Activated B cell treated with CpG ODN at 0.5 μM for 24 hours (primary cell): ENCODE measurements at regions of chr20 and their contacts with region 1.

Region 1: GRCh38 chr20:49928401-49929141 is 7.6 kb upstream of the RNF114 start:
- DNase-seq: peak; percentile 48
- ATAC-seq: peak; percentile 85
- H3K4me3 Mint-ChIP-seq: no peak overlapping the region
- H3K27ac Mint-ChIP-seq: no peak overlapping the region
- H3K4me1 Mint-ChIP-seq: peaks cover 4% of the 10 kb centered on the region
- H3K27me3 Mint-ChIP-seq: no peaks in the 10 kb centered on the region
- CTCF ChIP-seq: peak; percentile 59

Region 2: DNA sequence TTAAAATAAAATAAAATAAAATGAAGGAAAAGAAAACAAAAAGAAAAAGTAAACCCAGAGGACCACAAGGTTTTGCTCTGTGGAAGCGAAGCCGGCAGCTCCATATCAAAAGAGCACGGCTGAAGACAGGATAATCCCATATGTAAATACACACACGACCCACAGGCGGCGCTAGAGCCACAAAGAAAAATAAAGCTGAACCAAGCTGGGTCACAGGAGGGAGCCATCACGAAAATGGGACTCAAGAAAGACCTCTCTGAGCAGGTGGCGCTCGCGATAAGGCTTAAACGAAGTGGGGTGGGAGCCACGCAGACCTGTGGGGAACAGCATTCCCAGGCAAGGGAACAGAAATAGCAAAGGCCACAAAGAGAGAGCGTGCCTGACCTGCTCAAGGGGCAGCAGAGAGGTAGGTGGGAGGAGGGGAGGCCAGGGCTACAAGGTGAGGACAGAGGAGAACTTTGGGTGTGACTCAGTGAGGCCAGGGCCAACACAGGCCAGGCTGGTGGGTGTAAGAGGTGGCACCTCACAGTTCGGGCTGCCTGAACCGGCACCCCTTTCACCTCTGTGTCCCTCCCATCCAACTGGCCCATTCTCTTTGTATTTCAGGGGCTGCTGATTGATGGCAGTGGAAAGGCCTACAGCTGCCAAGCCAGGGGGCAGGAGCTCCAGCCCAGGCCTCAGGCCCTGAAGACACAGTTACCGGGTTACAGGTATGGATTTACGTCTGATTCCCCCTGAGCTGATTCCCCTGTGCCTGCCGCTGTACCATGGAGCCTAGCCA is 386.6 kb before region 1 on chr20:
- CTCF ChIA-PET with region 1: interaction called, 7 read pairs
- POLR2A ChIA-PET with region 1: no interaction called
- intact Hi-C with region 1: loop called (anchors 1 kb)
- DNase-seq: peak; percentile 21
- ATAC-seq: peak; percentile 80
- H3K4me3 Mint-ChIP-seq: no peak overlapping the region
- H3K27ac Mint-ChIP-seq: no peak overlapping the region
- H3K4me1 Mint-ChIP-seq: no peaks in the 10 kb centered on the region
- H3K27me3 Mint-ChIP-seq: peaks cover 14% of the 10 kb centered on the region
- CTCF ChIP-seq: no peak

Region 3: DNA sequence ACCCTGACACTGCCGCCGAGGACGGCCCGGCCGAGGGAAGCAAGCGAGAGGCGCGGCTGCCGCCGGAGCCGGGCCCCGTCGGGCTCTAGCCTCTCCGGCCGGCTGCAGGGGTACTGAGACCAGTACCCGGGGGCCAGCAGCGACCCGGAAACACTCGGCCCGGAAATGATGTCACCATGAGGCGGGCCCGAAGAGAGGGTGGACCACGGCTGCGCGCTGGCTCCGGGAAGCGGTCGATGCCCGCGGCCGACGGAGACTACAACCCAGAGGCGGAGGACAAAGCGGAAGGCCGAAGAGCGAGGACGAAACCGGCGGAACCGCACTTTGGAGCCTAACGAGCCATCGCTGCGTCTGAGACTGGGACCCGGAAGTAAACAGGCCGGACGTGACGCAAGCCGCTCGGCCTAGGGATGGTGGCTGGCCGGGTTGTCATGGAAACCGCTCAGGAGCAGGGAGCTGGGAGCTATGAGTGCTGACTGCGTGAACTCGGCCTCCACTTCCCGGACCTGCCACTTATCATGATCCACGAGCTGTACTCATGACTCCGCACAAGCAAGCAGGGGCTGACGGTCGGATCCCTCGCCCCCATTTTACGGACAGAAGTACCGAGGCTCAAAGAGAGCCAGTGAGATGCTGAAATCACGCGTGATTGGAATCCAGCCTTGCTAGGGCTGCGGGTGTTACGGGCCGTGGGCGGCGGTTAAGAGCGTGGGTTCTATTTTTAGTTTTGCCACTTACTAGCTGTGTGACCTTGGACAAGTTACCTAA is 13.0 kb before region 1 on chr20 and contains the start of gene SPATA2:
- CTCF ChIA-PET with region 1: no interaction called
- POLR2A ChIA-PET with region 1: interaction called, 3 read pairs
- intact Hi-C with region 1: loop called (anchors 2 kb)
- DNase-seq: peak; percentile 95
- ATAC-seq: peak; percentile 80
- H3K4me3 Mint-ChIP-seq: peak within 1 kb of the TSS; percentile 97
- H3K27ac Mint-ChIP-seq: peak within 1 kb of the TSS; percentile 99
- H3K4me1 Mint-ChIP-seq: peaks cover 34% of the 10 kb centered on the region
- H3K27me3 Mint-ChIP-seq: no peaks in the 10 kb centered on the region
- CTCF ChIP-seq: no peak
- total RNA-seq, gene SPATA2: 9.1 and 9.4 TPM in 2 replicates